ENCODE measurements at regions of chr5 and their contacts with region 1.

Region 1: DNA sequence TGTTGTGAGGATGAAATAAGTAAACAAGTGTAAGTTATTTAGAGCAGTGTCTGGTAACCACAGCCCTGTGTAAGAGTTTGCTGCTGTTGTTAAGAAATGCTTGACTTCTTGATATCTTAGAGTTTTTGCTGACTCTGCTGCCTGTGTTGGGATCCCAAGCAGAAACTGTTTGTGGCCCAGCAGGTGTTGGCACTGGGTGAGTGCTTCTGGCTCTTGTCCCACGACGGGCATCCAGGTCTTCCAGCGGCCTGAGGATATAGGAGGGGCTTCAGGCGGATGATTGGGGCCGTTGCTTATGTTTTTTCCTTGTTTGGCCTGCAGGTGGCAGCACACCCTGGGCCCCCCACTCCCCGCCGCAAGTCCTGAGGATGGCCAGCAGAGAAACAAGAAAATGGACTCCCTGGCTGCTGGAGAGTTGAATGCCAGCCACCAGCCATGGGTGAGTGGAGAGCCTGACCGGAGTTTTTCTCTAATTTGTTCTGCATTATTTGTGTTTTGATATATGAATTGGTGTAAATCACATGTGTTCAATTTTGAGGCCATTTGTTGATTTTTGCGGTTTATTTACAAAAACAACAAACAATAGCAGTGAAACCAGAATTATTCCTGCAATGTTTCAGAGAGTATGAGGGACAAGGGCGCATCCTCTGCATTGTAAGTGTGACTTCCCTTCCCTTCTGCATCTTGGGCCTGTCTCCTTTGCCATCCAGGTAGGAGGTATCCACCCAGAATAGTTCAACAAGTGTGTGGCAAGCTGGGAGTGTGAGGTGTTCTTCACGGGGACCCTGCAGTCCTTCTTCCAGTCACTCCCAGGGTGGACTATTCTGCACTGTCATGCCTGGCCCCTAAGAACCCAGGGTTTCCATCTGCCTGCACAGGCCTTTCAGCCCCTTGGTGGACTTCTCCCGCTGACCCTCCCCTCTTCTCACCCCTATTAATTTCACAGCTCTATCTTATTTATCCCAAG is 50.3 kb downstream of the SLC22A5 start:
- DNase-seq: peak; percentile 76
- ATAC-seq: peak; percentile 55
- H3K4me3 Mint-ChIP-seq: peak overlapping the region; percentile 76
- H3K27ac Mint-ChIP-seq: peak overlapping the region; percentile 94
- H3K4me1 Mint-ChIP-seq: peaks cover 78% of the 10 kb centered on the region
- H3K27me3 Mint-ChIP-seq: no peaks in the 10 kb centered on the region

Region 2: GRCh38 chr5:132384506-132385050 is 35.2 kb before region 1 on chr5:
- POLR2A ChIA-PET with region 1: no interaction called
- DNase-seq: no peak
- ATAC-seq: no peak
- H3K4me3 Mint-ChIP-seq: no peak overlapping the region
- H3K27ac Mint-ChIP-seq: no peak overlapping the region
- H3K4me1 Mint-ChIP-seq: peaks cover 31% of the 10 kb centered on the region
- H3K27me3 Mint-ChIP-seq: no peaks in the 10 kb centered on the region

Region 3: DNA sequence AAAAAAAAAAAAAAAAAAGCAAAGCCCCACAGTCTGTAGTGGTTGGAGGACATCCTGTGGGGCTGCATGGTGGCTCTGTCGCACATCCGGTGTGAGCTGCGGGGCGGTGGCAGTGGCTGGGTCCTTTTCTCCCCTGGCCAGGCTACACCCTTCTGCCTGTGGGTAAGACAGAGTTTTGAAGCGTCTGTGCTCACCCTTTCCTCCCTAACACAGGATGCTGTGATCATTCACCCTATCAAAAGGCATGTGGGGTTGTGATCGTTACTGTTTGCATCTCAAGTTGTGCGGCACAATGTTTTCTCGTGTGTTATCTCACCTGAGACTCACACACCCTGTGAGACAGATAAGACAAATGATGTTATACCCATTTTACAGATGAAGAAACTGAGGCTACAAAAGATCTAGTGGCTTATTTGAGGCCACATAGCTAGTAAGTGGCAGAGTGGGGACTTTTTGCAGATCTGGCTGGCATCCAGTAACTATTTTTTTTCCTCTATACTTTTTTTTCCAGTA is 53.3 kb after region 1 on chr5:
- POLR2A ChIA-PET with region 1: interaction called, 162 read pairs
- DNase-seq: peak; percentile 84
- ATAC-seq: peak; percentile 97
- H3K4me3 Mint-ChIP-seq: peak overlapping the region; percentile 55
- H3K27ac Mint-ChIP-seq: peak overlapping the region; percentile 88
- H3K4me1 Mint-ChIP-seq: peaks cover 73% of the 10 kb centered on the region
- H3K27me3 Mint-ChIP-seq: no peaks in the 10 kb centered on the region

Region 4: GRCh38 chr5:132490486-132491367 is 70.9 kb after region 1 on chr5 and contains the start of gene IRF1:
- POLR2A ChIA-PET with region 1: interaction called, 211 read pairs
- DNase-seq: peak; percentile 99
- ATAC-seq: peak; percentile 78
- H3K4me3 Mint-ChIP-seq: peak within 1 kb of the TSS; percentile 98
- H3K27ac Mint-ChIP-seq: peak within 1 kb of the TSS; percentile 92
- H3K4me1 Mint-ChIP-seq: peaks cover 63% of the 10 kb centered on the region
- H3K27me3 Mint-ChIP-seq: no peaks in the 10 kb centered on the region
- total RNA-seq, gene IRF1: 228 to 238 TPM

Region 5: GRCh38 chr5:132495667-132496190 is 75.9 kb after region 1 on chr5:
- POLR2A ChIA-PET with region 1: interaction called, 211 read pairs
- DNase-seq: peak; percentile 82
- ATAC-seq: peak; percentile 57
- H3K4me3 Mint-ChIP-seq: peak overlapping the region; percentile 87
- H3K27ac Mint-ChIP-seq: peak overlapping the region; percentile 99
- H3K4me1 Mint-ChIP-seq: peaks cover 61% of the 10 kb centered on the region
- H3K27me3 Mint-ChIP-seq: no peaks in the 10 kb centered on the region

Measured in activated naive CD8-positive, alpha-beta T cell treated with anti-CD3 and anti-CD28 coated beads, Interleukin-2, amount 10 ng/mL, durations not matched to agents 7 days and 5 days (primary cell).